ENCODE measurements at regions of chr17 and their contacts with region 1.

Region 1: GRCh38 chr17:19766422-19767270 is 18.5 kb upstream of the ALDH3A1 start:
- DNase-seq: peak; percentile 90
- ATAC-seq: peak; percentile 92
- H3K4me3 ChIP-seq: no peak overlapping the region
- H3K27ac ChIP-seq: no peak overlapping the region
- H3K4me1 ChIP-seq: no peaks in the 10 kb centered on the region
- H3K27me3 ChIP-seq: no peaks in the 10 kb centered on the region
- CTCF ChIP-seq: peak; percentile 95

Region 2: GRCh38 chr17:19513897-19514488 is 252.7 kb before region 1 on chr17:
- intact Hi-C with region 1: loop called (anchors 5 kb)
- DNase-seq: peak; percentile 75
- ATAC-seq: peak; percentile 95
- H3K4me3 ChIP-seq: no peak overlapping the region
- H3K27ac ChIP-seq: no peak overlapping the region
- H3K4me1 ChIP-seq: peaks cover 6% of the 10 kb centered on the region
- H3K27me3 ChIP-seq: no peaks in the 10 kb centered on the region
- CTCF ChIP-seq: peak; percentile 90

Region 3: DNA sequence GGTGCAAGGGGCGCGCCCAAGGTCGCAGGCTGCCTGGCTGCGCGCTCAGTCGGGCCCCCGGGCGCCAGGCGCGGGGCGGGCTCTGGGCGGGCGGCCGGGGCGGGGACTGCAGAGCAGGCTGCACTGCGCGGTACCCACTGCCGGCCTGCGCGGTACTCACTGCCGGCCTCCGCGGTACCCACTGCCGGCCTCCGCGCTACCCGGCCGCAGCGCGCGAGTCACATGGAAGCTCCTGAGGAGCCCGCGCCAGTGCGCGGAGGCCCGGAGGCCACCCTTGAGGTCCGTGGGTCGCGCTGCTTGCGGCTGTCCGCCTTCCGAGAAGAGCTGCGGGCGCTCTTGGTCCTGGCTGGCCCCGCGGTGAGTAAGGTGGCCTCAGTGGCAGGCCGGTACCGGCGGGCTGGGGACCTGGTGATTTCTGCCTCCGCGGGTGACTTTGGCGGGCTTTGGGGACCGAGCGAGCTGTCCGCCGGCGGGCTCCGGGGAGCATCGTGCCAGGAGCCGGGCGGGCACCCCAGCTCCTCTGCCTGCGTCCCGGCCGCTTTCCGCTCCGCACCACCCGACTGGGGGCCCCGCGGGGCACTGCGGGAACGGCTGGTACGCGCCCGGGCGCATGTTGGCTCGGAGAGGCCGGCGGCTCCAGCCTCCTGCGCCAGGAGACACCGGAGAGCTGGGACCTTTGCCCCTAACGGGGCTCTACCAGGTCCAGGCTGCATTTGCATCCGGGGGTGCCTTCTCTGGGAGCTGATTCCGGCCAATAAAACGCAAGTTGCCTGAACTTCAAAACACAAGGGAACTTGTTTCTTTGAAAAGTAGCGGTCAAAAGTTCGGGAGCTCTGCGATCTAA is 232.7 kb before region 1 on chr17 and contains the start of gene SLC47A1:
- intact Hi-C with region 1: loop called (anchors 5 kb)
- DNase-seq: peak; percentile 80
- ATAC-seq: peak; percentile 89
- H3K4me3 ChIP-seq: peak within 1 kb of the TSS; percentile 62
- H3K27ac ChIP-seq: no peak within 1 kb of the TSS
- H3K4me1 ChIP-seq: peaks cover 11% of the 10 kb centered on the region
- H3K27me3 ChIP-seq: peaks cover 4% of the 10 kb centered on the region
- CTCF ChIP-seq: no peak
- total RNA-seq, gene SLC47A1: 13.4 TPM

Region 4: DNA sequence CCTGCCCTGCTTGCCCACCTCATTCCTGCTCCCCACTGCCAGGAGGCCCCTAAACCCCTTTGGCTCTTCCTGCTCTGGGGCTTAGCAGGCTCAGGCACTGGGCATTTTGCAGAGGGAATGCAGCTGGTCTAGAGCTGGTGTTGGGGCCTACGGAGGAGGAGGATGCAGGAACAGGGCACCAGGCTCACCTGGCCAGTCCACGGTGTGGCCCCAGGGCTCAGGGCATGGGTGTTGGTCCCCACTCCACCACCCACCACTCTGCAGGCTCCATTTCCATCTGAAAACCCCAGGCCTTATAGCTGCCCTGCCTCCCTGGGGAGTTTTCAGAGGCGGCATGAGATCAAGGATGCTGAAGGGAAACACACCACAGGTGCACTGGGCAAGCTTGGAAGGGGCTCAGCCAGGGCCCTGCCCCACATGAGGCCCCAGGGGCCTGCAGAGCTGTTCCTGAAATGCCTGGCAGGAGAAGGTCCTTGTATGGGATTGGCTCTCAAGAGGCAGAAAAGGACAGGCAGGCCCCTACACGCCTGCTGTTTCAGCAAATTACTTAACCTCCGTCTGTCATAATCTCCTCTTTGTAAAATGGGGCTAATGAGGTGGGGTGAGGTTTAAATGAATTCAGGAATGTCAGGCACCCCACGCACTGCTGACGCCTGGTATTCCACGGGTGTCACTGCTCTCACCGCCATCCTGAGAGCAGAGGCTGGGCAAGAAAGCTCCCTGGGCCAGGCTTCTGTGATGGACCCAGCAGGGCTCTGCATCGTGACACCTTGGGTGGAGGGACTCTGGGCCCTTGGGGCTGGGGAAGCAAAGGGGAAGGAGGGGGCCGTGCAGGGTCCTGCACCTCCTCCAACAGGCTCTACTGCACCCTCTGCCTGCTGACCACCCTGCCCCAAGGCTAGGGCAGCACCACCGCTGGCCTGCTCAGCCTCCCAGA is 59.6 kb before region 1 on chr17:
- intact Hi-C with region 1: no loop called
- DNase-seq: no peak
- ATAC-seq: no peak
- H3K4me3 ChIP-seq: no peak overlapping the region
- H3K27ac ChIP-seq: no peak overlapping the region
- H3K4me1 ChIP-seq: peaks cover 11% of the 10 kb centered on the region
- H3K27me3 ChIP-seq: no peaks in the 10 kb centered on the region
- CTCF ChIP-seq: no peak

Measured in upper lobe of right lung (tissue), 1 donor.